T-cell (primary cell): ENCODE measurements at regions of chr10 and their contacts with region 1.

Region 1: GRCh38 chr10:17368708-17369272 is 85.6 kb downstream of the ST8SIA6 start:
- DNase-seq: no peak
- ATAC-seq: no peak
- H3K4me3 ChIP-seq: no peak overlapping the region
- H3K4me3 Mint-ChIP-seq: no peak overlapping the region
- H3K27ac ChIP-seq: no peak overlapping the region
- H3K27ac Mint-ChIP-seq: no peak overlapping the region
- H3K4me1 ChIP-seq: no peaks in the 10 kb centered on the region
- H3K4me1 Mint-ChIP-seq: no peaks in the 10 kb centered on the region
- H3K27me3 ChIP-seq: no peaks in the 10 kb centered on the region
- H3K27me3 Mint-ChIP-seq: no peaks in the 10 kb centered on the region

Region 2: GRCh38 chr10:17309435-17309834 is 59.4 kb before region 1 on chr10:
- CTCF ChIA-PET with region 1: no interaction called
- POLR2A ChIA-PET with region 1: no interaction called
- DNase-seq: no peak
- ATAC-seq: no peak
- H3K4me3 ChIP-seq: no peak overlapping the region
- H3K4me3 Mint-ChIP-seq: no peak overlapping the region
- H3K27ac ChIP-seq: no peak overlapping the region
- H3K27ac Mint-ChIP-seq: no peak overlapping the region
- H3K4me1 ChIP-seq: no peaks in the 10 kb centered on the region
- H3K4me1 Mint-ChIP-seq: no peaks in the 10 kb centered on the region
- H3K27me3 ChIP-seq: peaks cover 0 to 3% of the 10 kb centered on the region in 2 experiments
- H3K27me3 Mint-ChIP-seq: peaks cover 26 to 32% of the 10 kb centered on the region in 2 donors

Region 3: DNA sequence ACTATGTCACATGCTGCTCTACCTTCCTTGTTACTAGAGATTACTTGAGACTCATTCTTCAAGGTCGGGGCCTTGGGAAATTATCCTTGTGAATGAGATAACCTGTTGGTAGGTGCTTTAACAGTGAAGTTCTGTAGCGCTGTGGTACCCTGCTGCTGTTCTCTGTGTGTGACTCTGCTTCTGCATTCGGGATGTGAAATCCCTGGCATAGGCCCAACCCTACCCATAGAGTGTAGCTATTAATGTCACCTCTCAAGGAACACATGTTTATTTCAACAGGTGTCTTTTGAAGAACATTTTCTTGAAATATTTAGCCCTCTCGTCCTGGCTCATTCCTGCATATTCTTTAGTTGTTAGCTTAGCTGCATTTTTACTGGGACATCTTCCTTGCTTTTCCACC is 341.4 kb after region 1 on chr10:
- CTCF ChIA-PET with region 1: no interaction called
- POLR2A ChIA-PET with region 1: interaction called in 1 of 2 experiments, 12 read pairs
- DNase-seq: no peak
- ATAC-seq: no peak
- H3K4me3 ChIP-seq: no peak overlapping the region
- H3K4me3 Mint-ChIP-seq: no peak overlapping the region
- H3K27ac ChIP-seq: no peak overlapping the region
- H3K27ac Mint-ChIP-seq: no peak overlapping the region
- H3K4me1 ChIP-seq: no peaks in the 10 kb centered on the region
- H3K4me1 Mint-ChIP-seq: no peaks in the 10 kb centered on the region
- H3K27me3 ChIP-seq: no peaks in the 10 kb centered on the region
- H3K27me3 Mint-ChIP-seq: no peaks in the 10 kb centered on the region